Activated B cell treated with CpG ODN at 0.5 μM for 24 hours (primary cell): ENCODE measurements at regions of chr3 and their contacts with region 1.

Region 1: DNA sequence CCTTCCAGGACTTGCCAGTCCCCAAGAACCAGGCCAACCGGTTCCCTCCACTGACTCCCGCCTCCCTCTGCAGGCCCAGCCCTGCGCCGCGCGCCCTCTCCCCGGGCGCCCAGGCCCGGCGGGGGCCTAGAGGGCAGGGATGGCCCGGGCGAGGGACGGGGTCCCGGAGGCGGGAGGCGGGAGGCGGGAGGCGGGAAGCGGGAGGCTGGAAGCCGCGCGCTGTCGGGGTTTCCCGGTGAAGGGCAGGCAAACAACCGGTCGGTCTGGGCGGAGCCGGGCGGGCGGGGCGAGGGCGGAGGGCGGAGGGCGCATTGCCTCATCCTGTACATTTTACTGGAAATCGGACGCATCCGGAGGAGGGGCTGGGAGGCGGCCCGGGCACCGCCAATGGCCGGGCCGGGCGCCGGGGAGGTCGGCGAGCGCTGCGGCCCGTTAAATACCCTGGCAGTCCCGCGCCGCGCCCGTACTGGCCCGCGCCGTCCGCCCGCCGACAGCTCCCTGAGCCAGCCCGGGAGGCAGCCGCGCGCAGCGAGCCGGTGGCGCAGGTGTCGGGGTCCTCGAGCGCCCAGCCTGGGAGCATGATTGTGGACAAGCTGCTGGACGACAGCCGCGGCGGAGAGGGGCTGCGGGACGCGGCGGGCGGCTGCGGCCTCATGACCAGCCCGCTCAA is at the start of gene NFKBIZ:
- DNase-seq: peak; percentile 87
- ATAC-seq: peak; percentile 82
- H3K4me3 Mint-ChIP-seq: peak within 1 kb of the TSS; percentile 98
- H3K27ac Mint-ChIP-seq: peak within 1 kb of the TSS; percentile 96
- H3K4me1 Mint-ChIP-seq: peaks cover 63% of the 10 kb centered on the region
- H3K27me3 Mint-ChIP-seq: no peaks in the 10 kb centered on the region
- CTCF ChIP-seq: no peak
- total RNA-seq, gene NFKBIZ: 391 and 421 TPM in 2 replicates

Region 2: DNA sequence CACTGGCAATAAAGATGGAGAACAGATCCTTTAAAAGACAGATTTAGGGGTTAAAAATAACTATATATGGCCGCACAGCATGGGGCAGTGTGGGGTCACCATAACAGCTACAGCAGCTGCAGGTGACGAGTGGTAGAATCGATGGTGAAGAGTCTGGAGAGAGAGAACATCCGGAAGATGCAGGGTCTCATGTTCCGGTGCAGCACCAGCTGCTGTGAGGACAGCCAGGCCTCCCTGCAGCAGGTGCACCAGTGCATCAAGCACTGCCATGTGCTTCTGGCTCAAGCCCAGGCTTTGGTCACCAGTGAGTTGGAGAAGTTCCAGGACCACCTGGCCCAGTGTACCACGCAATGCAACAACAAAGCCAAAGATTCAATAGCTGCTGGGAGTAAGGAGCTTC is 435.1 kb before region 1 on chr3:
- CTCF ChIA-PET with region 1: no interaction called
- POLR2A ChIA-PET with region 1: no interaction called
- intact Hi-C with region 1: no loop called
- DNase-seq: no peak
- ATAC-seq: no peak
- H3K4me3 Mint-ChIP-seq: no peak overlapping the region
- H3K27ac Mint-ChIP-seq: no peak overlapping the region
- H3K4me1 Mint-ChIP-seq: peaks cover 1% of the 10 kb centered on the region
- H3K27me3 Mint-ChIP-seq: no peaks in the 10 kb centered on the region
- CTCF ChIP-seq: no peak

Region 3: DNA sequence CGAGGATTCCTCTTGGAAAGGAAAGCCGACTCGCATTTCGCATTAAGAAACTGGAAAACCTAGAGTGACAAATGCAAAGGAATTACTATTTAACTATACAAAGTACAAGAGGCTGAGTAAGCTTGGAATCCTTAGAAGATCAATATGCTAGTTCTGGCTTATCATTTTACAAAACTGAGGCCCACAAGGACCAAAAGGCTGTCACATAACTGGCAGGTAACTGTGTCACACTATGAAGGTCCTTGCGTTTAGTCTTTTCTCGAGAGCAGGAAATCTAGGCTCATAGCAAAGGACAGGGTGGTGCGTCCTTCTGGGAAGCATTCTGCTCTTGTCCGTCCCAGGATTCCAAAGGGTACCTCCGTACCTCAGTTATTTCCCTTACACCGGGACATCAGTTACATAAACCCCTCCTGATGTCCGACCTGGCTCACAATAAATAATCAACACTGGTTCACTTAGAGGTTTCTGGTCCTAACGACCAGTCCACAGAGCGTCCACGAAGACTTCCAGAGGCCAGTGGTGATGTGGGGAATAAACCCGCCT is 163.2 kb before region 1 on chr3:
- CTCF ChIA-PET with region 1: no interaction called
- POLR2A ChIA-PET with region 1: interaction called, 3 read pairs
- intact Hi-C with region 1: loop called (anchors 1 kb)
- DNase-seq: no peak
- ATAC-seq: peak; percentile 6
- H3K4me3 Mint-ChIP-seq: peak overlapping the region; percentile 100
- H3K27ac Mint-ChIP-seq: peak overlapping the region; percentile 99
- H3K4me1 Mint-ChIP-seq: peaks cover 40% of the 10 kb centered on the region
- H3K27me3 Mint-ChIP-seq: no peaks in the 10 kb centered on the region
- CTCF ChIP-seq: no peak

Region 4: DNA sequence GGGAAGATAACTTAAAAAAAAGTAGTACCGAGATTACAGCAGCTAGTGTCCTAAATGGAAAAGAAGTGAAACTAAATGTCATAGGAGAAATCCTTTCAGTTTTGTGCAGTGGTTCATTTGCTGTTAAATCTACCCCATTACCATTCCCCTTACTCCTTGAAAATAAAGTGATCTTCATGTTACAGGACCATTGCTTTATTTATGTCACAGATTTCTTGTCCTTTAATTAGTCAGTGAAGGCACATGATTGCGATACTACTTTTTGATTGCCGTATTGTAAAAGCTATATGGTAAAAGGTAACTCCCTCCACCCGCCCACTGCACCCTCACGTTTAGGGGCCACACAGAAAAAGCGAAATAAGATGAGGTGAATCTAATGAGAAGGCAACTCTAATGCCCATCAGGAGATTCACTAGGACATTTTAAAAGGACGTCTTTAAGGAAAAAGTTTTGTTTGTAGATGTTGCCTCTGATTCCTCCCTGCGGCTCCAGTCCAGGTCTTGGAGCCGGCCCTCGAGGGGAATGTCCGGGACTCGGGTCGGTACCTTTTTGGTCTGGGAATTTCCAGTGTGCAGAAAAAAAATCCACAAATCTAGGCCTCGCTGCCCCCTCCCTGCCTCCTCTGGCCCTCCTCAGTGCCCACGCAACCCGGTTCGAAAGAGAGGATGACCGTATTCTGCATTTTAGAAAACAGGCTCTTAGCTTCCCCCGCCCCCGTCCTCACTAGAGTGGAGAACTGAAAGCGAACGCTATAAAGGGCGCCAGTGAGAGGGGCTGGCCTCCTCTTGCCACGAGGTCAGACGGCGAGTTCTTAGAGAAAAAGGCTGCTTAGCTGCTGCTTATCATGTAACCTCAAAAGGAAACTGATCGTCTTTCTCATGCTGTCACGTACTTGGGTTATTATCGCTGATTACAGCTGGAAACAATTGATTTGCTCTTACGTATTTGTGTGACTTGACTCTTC is 21.7 kb before region 1 on chr3:
- CTCF ChIA-PET with region 1: interaction called, 8 read pairs
- POLR2A ChIA-PET with region 1: interaction called, 197 read pairs
- intact Hi-C with region 1: loop called (anchors 1 kb)
- DNase-seq: peak; percentile 68
- ATAC-seq: peak; percentile 86
- H3K4me3 Mint-ChIP-seq: peak overlapping the region; percentile 87
- H3K27ac Mint-ChIP-seq: peak overlapping the region; percentile 98
- H3K4me1 Mint-ChIP-seq: peaks cover 66% of the 10 kb centered on the region
- H3K27me3 Mint-ChIP-seq: no peaks in the 10 kb centered on the region
- CTCF ChIP-seq: no peak

Region 5: GRCh38 chr3:101868534-101869464 is 19.6 kb after region 1 on chr3:
- CTCF ChIA-PET with region 1: interaction called, 3 read pairs
- POLR2A ChIA-PET with region 1: interaction called, 21 read pairs
- intact Hi-C with region 1: no loop called
- DNase-seq: no peak
- ATAC-seq: peak; percentile 68
- H3K4me3 Mint-ChIP-seq: no peak overlapping the region
- H3K27ac Mint-ChIP-seq: peak overlapping the region; percentile 31
- H3K4me1 Mint-ChIP-seq: peaks cover 38% of the 10 kb centered on the region
- H3K27me3 Mint-ChIP-seq: no peaks in the 10 kb centered on the region
- CTCF ChIP-seq: no peak

Region 6: GRCh38 chr3:101936419-101937356 is 87.5 kb after region 1 on chr3:
- CTCF ChIA-PET with region 1: interaction called, 3 read pairs
- POLR2A ChIA-PET with region 1: interaction called, 84 read pairs
- intact Hi-C with region 1: loop called (anchors 1 kb)
- DNase-seq: no peak
- ATAC-seq: peak; percentile 78
- H3K4me3 Mint-ChIP-seq: peak overlapping the region; percentile 76
- H3K27ac Mint-ChIP-seq: peak overlapping the region; percentile 94
- H3K4me1 Mint-ChIP-seq: peaks cover 49% of the 10 kb centered on the region
- H3K27me3 Mint-ChIP-seq: no peaks in the 10 kb centered on the region
- CTCF ChIP-seq: no peak

Region 7: DNA sequence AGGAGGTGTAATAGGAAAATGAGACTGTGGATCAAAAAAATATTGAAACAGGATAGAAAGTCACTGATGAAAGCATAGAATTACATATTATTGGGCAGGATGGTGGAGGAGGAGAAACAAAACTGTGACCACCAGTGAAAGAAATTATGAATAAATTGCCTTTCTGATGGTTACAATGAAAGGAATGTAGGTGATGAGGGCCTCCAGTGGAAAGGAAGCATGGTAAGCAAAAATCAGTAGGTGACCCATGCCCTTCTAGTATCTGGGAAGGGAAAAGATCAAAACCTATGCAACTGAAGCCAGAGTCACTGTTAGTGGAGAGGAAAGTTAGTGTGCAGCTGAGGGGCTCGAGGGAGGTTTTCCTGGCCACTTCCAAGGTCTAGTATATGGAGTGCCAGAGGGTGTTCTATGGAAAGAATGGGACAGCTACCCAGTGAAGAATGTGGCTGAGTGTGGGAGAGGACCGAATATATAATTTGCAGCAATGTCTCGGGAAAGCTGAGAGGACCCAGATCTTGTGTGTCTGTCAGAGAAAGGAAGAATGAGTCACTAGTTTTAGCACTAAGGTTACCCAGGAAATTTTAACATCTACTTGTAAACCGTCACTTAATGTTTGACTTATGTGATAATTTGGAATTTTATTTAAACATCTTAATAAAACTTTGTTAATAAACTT is 146.3 kb after region 1 on chr3:
- CTCF ChIA-PET with region 1: no interaction called
- POLR2A ChIA-PET with region 1: interaction called, 27 read pairs
- intact Hi-C with region 1: no loop called
- DNase-seq: no peak
- ATAC-seq: no peak
- H3K4me3 Mint-ChIP-seq: peak overlapping the region; percentile 5
- H3K27ac Mint-ChIP-seq: peak overlapping the region; percentile 78
- H3K4me1 Mint-ChIP-seq: peaks cover 68% of the 10 kb centered on the region
- H3K27me3 Mint-ChIP-seq: no peaks in the 10 kb centered on the region
- CTCF ChIP-seq: no peak

Region 8: GRCh38 chr3:102129760-102130608 is 280.8 kb after region 1 on chr3:
- CTCF ChIA-PET with region 1: no interaction called
- POLR2A ChIA-PET with region 1: interaction called, 3 read pairs
- intact Hi-C with region 1: loop called (anchors 5 kb)
- DNase-seq: no peak
- ATAC-seq: peak; percentile 56
- H3K4me3 Mint-ChIP-seq: no peak overlapping the region
- H3K27ac Mint-ChIP-seq: peak overlapping the region; percentile 42
- H3K4me1 Mint-ChIP-seq: peaks cover 23% of the 10 kb centered on the region
- H3K27me3 Mint-ChIP-seq: no peaks in the 10 kb centered on the region
- CTCF ChIP-seq: no peak